ENCODE measurements at regions of chr15 and their contacts with region 1.

Region 1: DNA sequence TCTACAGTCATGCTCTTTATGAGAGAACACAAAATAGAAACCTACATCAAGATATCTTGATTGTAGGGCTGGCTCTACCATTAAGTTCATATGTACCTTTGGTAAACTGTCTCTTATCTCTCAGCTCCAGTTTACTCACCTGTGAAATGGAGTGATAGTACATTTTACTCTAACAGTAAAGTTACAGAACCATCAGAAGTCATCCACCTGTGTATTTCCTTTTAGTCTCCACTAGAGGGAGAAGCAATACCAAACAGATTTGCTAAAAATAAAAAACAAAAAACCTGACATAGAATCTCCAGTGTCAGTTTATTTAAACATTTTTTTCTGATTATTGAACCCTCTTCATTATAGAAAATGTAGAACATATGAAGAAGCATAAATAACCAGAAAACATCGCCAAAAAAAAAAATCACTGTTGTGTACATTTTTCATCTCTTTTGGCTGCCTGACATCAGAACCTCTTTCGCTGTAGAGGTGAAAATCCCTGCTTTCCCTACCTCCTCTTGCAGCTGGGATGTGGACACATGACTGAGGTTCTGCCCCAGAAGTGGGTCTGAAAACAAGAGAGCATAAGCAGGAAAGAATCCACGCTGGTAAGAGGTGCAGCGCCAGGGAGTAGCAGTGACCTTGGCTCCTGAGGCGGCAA is 48.7 kb upstream of the WDR72 start:
- DNase-seq: no peak
- ATAC-seq: no peak
- H3K4me3 ChIP-seq: no peak overlapping the region
- H3K27ac ChIP-seq: no peak overlapping the region
- H3K4me1 ChIP-seq: no peaks in the 10 kb centered on the region
- H3K27me3 ChIP-seq: no peaks in the 10 kb centered on the region
- CTCF ChIP-seq: peak; percentile 59

Region 2: DNA sequence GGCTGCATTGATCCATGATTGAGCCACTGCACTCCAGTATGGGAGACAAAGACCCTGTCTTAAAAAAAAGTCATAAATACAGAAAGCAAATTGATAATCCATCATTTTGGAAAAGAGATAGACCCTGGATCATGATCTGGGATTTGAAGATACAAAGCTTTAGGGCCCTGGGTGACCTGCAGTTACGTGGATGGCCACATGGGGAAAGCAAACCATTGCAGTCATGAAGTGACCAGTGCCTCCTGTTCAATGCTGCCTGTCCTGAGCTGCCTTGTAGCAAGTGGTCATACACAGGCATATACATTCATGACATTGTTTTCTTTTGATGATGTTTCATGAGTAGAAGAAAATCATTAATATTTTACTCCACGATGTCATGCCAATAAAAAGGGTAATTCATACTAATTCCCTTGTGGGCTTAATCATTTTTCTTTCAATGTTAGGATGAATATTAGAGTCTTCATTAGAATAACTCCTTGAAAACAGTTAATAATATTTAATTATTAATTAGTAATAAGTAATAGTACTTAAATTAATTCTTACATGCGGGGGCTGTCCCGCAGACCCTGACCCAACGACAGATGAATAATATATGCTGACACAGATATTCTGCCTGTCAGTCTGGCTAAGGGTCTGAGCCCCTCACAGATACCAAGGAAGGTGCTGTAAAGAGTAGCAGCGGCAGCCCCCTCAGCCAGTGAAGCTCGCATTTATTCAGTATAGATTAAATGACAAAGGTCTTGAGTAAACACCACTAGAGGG is 61.0 kb after region 1 on chr15:
- intact Hi-C with region 1: loop called (anchors 10 kb)
- DNase-seq: no peak
- ATAC-seq: no peak
- H3K4me3 ChIP-seq: no peak overlapping the region
- H3K27ac ChIP-seq: no peak overlapping the region
- H3K4me1 ChIP-seq: no peaks in the 10 kb centered on the region
- H3K27me3 ChIP-seq: no peaks in the 10 kb centered on the region
- CTCF ChIP-seq: no peak

Measured in lower lobe of right lung (tissue), 2 donors.